ENCODE measurements at regions of chr6 and their contacts with region 1.

Region 1: GRCh38 chr6:119333707-119334295 is 15.8 kb downstream of the MAN1A1 start:
- DNase-seq: peak in 1 of 3 donors; percentile 46
- H3K4me3 ChIP-seq: no peak overlapping the region
- H3K27ac ChIP-seq: no peak overlapping the region
- H3K4me1 ChIP-seq: peaks cover 5 to 58% (median 26%) of the 10 kb centered on the region in 4 experiments
- H3K27me3 ChIP-seq: no peaks in the 10 kb centered on the region

Region 2: GRCh38 chr6:119313937-119314884 is 19.6 kb before region 1 on chr6:
- CTCF ChIA-PET with region 1: interaction called, 15 read pairs
- POLR2A ChIA-PET with region 1: no interaction called
- DNase-seq: peak in 2 of 3 donors; percentile 71 to 79
- H3K4me3 ChIP-seq: no peak overlapping the region
- H3K27ac ChIP-seq: peak overlapping the region; percentile 30 to 73
- H3K4me1 ChIP-seq: peaks cover 20 to 62% (median 50%) of the 10 kb centered on the region in 4 experiments
- H3K27me3 ChIP-seq: no peaks in the 10 kb centered on the region

Measured in common myeloid progenitor, CD34-positive (primary cell).